OCI-LY7 (cell line): ENCODE measurements at regions of chr11 and their contacts with region 1.

Region 1: DNA sequence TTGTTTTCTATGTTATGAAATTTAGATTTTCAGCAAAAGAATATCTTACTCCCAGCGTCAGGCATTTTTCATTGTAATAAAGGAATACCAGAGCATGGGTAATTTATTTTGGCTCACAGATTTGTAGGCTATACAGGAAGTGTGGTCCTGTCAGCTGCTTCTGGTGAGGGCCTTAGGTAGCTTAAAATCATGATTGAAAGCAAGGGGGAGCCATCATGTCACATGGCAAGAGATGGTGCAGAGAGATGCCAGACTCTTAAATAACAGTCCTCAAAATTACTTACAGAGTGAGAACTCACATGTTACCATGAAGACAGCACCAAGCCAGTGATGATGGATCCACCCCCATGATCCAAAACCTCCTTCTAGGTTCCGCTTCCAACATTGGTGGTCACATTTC is 825.0 kb upstream of the CHORDC1 start:
- DNase-seq: no peak
- H3K4me3 ChIP-seq: no peak overlapping the region
- H3K27ac ChIP-seq: no peak overlapping the region
- H3K4me1 ChIP-seq: no peaks in the 10 kb centered on the region
- CTCF ChIP-seq: no peak

Region 2: DNA sequence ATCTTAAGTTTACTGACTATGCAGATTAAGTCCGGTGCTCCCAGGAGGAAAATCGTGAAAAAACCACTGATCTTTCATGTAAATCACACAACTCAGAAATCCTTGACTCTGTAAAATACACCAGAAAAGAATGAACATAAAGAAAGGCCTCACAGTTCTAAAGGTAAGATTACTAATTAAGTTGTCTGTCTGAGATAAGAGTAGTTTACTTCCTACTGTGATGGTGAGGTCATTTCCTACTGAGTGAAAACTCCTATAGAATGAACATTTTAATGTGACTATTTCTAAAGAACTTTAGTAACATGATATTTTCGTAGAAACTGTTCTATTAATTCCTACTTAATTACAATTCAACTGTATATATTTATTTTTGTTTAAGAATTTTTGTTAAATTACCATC is 50.6 kb before region 1 on chr11:
- CTCF ChIA-PET with region 1: no interaction called
- POLR2A ChIA-PET with region 1: no interaction called
- intact Hi-C with region 1: loop called (anchors 10 kb)
- DNase-seq: no peak
- H3K4me3 ChIP-seq: no peak overlapping the region
- H3K27ac ChIP-seq: no peak overlapping the region
- H3K4me1 ChIP-seq: no peaks in the 10 kb centered on the region
- CTCF ChIP-seq: no peak

Region 3: GRCh38 chr11:91124363-91124762 is 76.5 kb after region 1 on chr11:
- CTCF ChIA-PET with region 1: no interaction called
- POLR2A ChIA-PET with region 1: no interaction called
- intact Hi-C with region 1: no loop called
- DNase-seq: no peak
- H3K4me3 ChIP-seq: no peak overlapping the region
- H3K27ac ChIP-seq: no peak overlapping the region
- H3K4me1 ChIP-seq: no peaks in the 10 kb centered on the region
- CTCF ChIP-seq: no peak